Right ventricle myocardium superior (tissue), 1 donor: ENCODE measurements at regions of chr12 and their contacts with region 1.

Region 1: GRCh38 chr12:121712461-121713256 is at the start of gene TMEM120B:
- DNase-seq: peak; percentile 92
- ATAC-seq: peak; percentile 95
- total RNA-seq, gene TMEM120B: 9.1 TPM

Region 2: GRCh38 chr12:121773011-121773777 is 60.5 kb after region 1 on chr12:
- intact Hi-C with region 1: loop called (anchors 5 kb)
- DNase-seq: peak; percentile 81
- ATAC-seq: peak; percentile 69